Gastrocnemius medialis (tissue), 4 donors: ENCODE measurements at regions of chr2 and their contacts with region 1.

Region 1: GRCh38 chr2:46296840-46297545 is at the start of gene EPAS1:
- DNase-seq: peak; percentile 91 to 92
- ATAC-seq: peak; percentile 75 to 76
- H3K4me3 ChIP-seq: peak within 1 kb of the TSS; percentile 81 to 99 (median 94)
- H3K27ac ChIP-seq: peak within 1 kb of the TSS; percentile 91 to 98 (median 97)
- H3K4me1 ChIP-seq: peaks cover 16 to 23% of the 10 kb centered on the region in 2 donors
- H3K27me3 ChIP-seq: no peaks in the 10 kb centered on the region
- CTCF ChIP-seq: no peak
- POLR2A ChIP-seq: peak; percentile 78 to 95
- total RNA-seq, gene EPAS1: 61.5 to 95.1 (median 90.0) TPM

Region 2: DNA sequence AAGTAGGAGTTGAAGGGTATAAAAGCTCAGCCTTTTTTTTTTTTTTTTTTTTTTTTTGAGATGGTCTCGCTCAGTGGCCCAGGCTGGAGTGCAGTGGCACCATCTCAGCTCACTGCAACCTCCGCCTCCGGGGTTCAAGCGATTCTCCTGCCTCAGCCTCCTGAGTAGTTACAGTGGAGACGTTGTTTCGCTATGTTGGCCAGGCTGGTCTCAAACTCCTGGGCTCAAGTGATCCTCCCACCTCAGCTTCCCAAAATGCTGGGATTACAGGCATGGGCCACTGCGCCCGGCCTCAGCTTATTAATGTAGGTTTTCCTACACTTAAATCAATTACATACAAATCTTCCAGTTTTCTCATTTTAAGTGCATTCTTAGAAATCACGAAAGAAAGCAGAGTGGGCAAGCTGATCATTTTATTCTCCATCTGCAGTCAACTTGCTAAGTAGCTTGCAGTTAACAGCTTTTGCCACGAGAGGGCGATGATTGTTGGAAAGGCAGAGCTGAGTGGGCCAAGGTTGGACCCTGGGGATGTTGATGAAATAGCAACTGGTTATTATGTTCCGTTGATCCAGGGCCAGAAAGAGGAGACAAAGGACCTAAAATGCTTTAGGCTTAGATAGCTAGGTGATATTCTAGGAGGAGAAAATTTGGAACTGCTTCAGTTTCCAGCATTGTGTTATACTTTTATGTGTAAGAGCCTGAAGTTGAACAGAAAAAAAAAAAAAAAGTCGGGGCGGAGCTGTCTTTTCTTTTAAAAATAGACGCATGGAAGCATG is 234.2 kb before region 1 on chr2:
- in situ Hi-C with region 1: no loop called
- intact Hi-C with region 1: loop called (anchors 2 kb)
- DNase-seq: peak; percentile 55 to 69
- ATAC-seq: peak; percentile 75 to 77
- H3K4me3 ChIP-seq: no peak overlapping the region
- H3K27ac ChIP-seq: peak overlapping the region; percentile 17 to 71 (median 64)
- H3K4me1 ChIP-seq: peaks cover 9 to 17% of the 10 kb centered on the region in 2 donors
- H3K27me3 ChIP-seq: no peaks in the 10 kb centered on the region
- CTCF ChIP-seq: peak; percentile 63 to 82 (median 76)
- POLR2A ChIP-seq: no peak

Region 3: DNA sequence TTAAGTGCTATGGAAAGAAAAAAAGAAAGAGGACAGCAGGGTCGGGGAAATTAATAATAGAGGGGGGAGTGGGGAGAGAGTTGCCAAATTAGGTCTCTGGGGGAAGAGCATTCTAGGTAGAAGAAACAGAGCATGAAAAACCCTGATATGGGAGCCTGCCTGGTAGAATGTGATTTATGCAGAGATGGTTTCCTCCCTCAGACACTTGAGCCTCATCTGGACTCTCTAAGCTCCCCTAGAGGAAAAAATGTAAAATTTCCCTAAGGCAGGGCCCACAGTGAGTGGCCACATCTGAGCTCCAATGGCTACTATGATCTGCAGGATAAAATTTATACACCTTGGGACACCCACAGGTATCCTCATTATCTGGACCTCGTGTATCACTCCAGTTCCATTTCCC is 20.4 kb before region 1 on chr2:
- in situ Hi-C with region 1: no loop called
- intact Hi-C with region 1: no loop called
- DNase-seq: no peak
- ATAC-seq: no peak
- H3K4me3 ChIP-seq: no peak overlapping the region
- H3K27ac ChIP-seq: peak overlapping the region in 3 of 4 donors; percentile 26 to 64 (median 54)
- H3K4me1 ChIP-seq: peaks cover 0 to 19% of the 10 kb centered on the region in 2 donors
- H3K27me3 ChIP-seq: no peaks in the 10 kb centered on the region
- CTCF ChIP-seq: no peak
- POLR2A ChIP-seq: no peak

Region 4: GRCh38 chr2:46335391-46336282 is 38.6 kb after region 1 on chr2:
- in situ Hi-C with region 1: no loop called
- intact Hi-C with region 1: loop called (anchors 2 kb)
- DNase-seq: no peak
- ATAC-seq: peak in 1 of 2 donors; percentile 21
- H3K4me3 ChIP-seq: peak overlapping the region; percentile 15 to 35 (median 35)
- H3K27ac ChIP-seq: peak overlapping the region; percentile 75 to 78 (median 77)
- H3K4me1 ChIP-seq: peaks cover 87 to 97% of the 10 kb centered on the region in 2 donors
- H3K27me3 ChIP-seq: no peaks in the 10 kb centered on the region
- CTCF ChIP-seq: no peak
- POLR2A ChIP-seq: no peak

Region 5: DNA sequence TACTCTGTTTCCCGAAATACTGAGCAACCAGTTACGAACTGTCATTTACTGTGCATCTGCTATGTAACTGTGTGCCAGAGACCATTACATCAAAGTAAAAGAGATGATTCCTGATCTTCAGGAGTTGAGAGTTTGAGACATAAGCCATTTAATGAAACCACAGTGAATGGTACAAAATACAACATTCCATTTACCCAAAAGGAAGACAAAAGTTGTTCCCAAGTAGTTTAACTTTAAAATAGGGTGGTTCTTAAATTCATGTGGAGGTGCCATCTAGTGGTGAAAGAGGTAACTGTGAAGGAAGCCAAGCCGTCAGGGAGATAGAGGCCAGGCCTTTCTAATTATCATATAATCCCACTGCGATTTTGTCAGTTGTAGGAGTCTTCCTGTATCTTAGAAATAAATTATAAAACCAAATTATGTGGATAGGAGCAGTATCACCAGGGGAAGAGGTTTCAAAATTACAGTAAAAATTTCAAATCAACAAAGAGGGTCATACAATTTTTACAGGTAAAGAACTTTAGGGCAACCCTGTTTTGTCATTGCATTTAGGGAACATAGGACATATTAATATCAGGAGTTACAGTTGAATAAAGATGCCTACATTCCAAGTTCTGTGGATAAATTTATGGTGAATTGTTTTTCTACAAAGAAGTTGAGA is 67.9 kb after region 1 on chr2:
- in situ Hi-C with region 1: no loop called
- intact Hi-C with region 1: loop called (anchors 2 kb)
- DNase-seq: no peak
- ATAC-seq: peak; percentile 44 to 71
- H3K4me3 ChIP-seq: no peak overlapping the region
- H3K27ac ChIP-seq: peak overlapping the region in 2 of 4 donors; percentile 12 to 19
- H3K4me1 ChIP-seq: peaks cover 7 to 10% of the 10 kb centered on the region in 2 donors
- H3K27me3 ChIP-seq: no peaks in the 10 kb centered on the region
- CTCF ChIP-seq: peak; percentile 71 to 84 (median 78)
- POLR2A ChIP-seq: no peak

Region 6: GRCh38 chr2:46706264-46706983 is 409.4 kb after region 1 on chr2:
- in situ Hi-C with region 1: no loop called
- intact Hi-C with region 1: loop called (anchors 5 kb)
- DNase-seq: no peak
- ATAC-seq: no peak
- H3K4me3 ChIP-seq: no peak overlapping the region
- H3K27ac ChIP-seq: peak overlapping the region; percentile 53 to 70 (median 61)
- H3K4me1 ChIP-seq: peaks cover 84 to 90% of the 10 kb centered on the region in 2 donors
- H3K27me3 ChIP-seq: no peaks in the 10 kb centered on the region
- CTCF ChIP-seq: no peak
- POLR2A ChIP-seq: no peak

Region 7: DNA sequence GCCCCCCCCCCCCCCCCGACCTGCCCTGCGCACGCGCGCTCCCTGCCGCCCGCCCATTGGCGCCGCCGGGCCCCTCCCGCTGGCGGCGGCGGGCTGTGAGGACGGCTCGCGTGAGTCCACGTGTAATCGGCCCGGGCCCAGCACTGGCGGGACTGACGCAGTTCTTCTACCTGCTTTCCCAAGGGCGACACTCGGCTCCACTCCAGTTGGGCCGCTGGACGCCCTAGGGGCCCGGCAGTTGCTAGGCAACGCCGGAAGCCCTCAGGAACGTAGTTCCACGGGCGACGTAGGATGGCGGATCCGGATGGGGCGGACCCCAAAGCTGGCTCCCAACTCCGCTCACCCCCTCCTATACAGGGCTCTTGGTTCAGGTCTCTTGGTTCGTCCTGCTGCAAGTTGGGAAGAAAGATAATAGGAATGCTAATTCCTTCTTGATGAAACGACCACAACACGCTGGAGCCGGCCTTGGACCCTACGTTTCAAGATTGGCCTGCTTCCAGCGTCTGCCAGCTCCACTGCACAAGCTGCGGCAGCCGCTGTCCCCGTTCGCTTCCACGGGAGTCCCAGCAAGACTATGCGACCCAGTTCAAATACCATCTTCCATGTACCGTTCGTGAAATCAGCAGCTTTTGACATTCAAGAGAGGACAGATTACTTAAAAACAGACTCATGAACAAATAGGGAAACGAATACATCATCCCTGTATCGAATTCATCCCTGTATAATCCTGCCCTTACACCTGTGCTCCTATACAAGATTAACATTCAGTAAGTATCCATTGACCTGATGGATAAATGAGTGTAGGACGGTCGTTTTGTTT is 619.0 kb after region 1 on chr2:
- in situ Hi-C with region 1: no loop called
- intact Hi-C with region 1: loop called (anchors 2 kb)
- DNase-seq: peak; percentile 96 to 99
- ATAC-seq: peak; percentile 82 to 86
- H3K4me3 ChIP-seq: peak overlapping the region; percentile 93 to 100 (median 96)
- H3K27ac ChIP-seq: peak overlapping the region; percentile 96 to 100 (median 99)
- H3K4me1 ChIP-seq: peaks cover 36% of the 10 kb centered on the region in 2 donors
- H3K27me3 ChIP-seq: no peaks in the 10 kb centered on the region
- CTCF ChIP-seq: no peak
- POLR2A ChIP-seq: peak; percentile 47 to 69